ENCODE measurements at regions of chr5 and their contacts with region 1.

Region 1: GRCh38 chr5:135426102-135427082 is 20.8 kb downstream of the DCANP1 start:
- H3K4me3 Mint-ChIP-seq: no peak overlapping the region
- H3K27ac Mint-ChIP-seq: peak overlapping the region; percentile 86
- H3K4me1 Mint-ChIP-seq: peaks cover 70% of the 10 kb centered on the region
- H3K27me3 Mint-ChIP-seq: no peaks in the 10 kb centered on the region

Region 2: DNA sequence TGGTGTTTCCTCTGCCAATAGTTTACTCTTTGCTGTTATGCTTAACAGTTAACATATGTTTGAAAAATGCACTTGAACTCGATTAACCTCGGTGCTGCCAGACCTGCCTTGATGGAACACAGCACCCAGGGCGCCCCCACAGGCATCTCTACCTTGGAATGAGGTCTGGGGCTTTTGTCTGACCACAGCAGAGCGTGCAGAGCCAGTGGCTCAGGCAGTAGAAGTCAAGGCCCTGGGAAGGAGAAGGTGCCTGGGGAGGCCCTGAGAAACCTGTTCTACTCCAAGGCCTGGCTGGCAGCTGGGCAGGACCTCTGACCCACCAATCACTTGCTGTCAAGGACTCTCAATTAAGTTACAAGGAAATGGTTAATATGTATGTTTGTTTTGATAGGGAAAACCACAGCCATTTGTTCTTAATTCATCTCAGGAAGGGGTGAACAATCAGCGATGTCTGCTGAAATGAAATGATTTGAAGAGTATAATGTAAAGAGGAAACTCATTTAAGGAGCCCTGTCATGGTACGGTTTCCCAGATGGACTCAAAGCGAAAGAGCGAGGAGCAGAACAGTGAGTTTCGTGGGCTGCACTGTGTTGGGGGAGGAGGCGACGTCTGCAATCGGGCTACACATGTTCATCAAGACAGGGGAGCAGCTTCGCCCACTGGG is 49.3 kb before region 1 on chr5:
- intact Hi-C with region 1: loop called (anchors 10 kb)
- H3K4me3 Mint-ChIP-seq: peak overlapping the region; percentile 64
- H3K27ac Mint-ChIP-seq: peak overlapping the region; percentile 86
- H3K4me1 Mint-ChIP-seq: peaks cover 92% of the 10 kb centered on the region
- H3K27me3 Mint-ChIP-seq: no peaks in the 10 kb centered on the region

Region 3: DNA sequence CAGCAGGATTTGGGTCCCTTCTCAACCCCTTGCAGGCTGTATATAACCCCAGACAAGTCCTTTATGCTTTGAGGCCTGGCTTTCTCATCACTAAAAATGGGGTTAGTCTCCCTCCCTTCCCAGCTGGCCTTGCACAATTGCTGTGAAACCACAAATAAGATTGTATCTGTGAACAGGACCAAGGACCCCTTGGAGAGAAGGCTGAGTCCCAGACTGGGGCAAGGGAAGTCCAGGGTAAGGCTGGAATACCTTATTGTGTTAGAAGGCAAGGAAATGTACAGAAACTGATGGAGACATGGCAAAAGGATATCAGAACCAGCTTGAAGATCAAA is 38.8 kb before region 1 on chr5:
- intact Hi-C with region 1: no loop called
- H3K4me3 Mint-ChIP-seq: no peak overlapping the region
- H3K27ac Mint-ChIP-seq: peak overlapping the region; percentile 90
- H3K4me1 Mint-ChIP-seq: peaks cover 97% of the 10 kb centered on the region
- H3K27me3 Mint-ChIP-seq: no peaks in the 10 kb centered on the region